Caco-2 (cell line): ENCODE measurements at regions of chr15 and their contacts with region 1.

Region 1: GRCh38 chr15:34342737-34343575 is at the starts of genes NOP10 and NUTM1:
- DNase-seq: peak; percentile 90 to 93
- H3K4me3 ChIP-seq: peak within 1 kb of the TSS; percentile 80
- H3K4me3 Mint-ChIP-seq: no peak within 1 kb of the TSS
- H3K27ac Mint-ChIP-seq: no peak within 1 kb of the TSS
- H3K4me1 ChIP-seq: no peaks in the 10 kb centered on the region
- H3K4me1 Mint-ChIP-seq: no peaks in the 10 kb centered on the region
- H3K27me3 ChIP-seq: no peaks in the 10 kb centered on the region
- H3K27me3 Mint-ChIP-seq: no peaks in the 10 kb centered on the region
- CTCF ChIP-seq: peak; percentile 85 to 93
- total RNA-seq, gene NOP10: 171 and 175 TPM in 2 replicates
- total RNA-seq, gene NUTM1: not detected in 2 replicates

Region 2: DNA sequence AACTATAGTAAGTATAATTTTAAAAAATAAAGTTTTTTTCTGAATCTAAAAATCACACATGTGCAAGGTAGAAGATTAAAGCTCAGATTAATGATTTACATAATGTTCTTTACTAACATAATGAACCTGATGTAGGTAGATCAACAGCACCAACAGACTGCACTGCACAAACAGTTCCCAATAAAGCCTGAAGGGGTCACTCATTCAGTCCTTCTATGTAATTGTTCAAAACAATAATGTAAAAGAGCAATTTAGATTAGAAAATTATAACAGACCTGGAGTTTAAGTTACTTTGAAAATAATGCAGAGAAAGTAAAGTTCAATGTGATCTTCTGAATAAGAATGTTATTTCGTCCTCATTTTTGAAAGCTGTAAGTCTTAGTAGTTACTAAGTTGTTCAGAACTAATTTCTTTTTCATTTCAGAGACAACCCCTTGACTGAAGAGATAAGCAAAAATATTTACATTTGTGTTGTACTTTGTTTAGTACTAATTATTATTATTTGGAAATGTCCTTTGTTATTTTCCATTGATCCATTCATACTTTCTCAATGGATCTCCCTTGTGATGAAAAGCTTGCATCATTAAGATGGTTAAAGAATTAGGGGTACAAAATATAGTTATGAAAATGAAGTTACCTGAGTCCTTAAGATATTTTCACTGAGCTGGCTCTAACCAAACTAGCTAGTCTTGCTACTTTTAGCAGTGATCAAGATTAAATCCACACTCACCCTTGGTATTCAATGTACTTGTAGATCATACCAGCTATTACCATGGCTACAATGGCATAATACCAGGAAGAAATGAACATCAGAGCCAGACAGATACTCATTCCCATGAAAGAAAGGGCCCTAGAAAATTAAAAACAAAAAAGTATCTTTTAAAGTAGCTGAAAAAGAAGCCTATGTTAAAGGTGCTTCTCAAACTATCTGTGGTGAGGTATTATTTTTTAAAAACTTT is 101.3 kb before region 1 on chr15:
- CTCF ChIA-PET with region 1: no interaction called
- POLR2A ChIA-PET with region 1: no interaction called
- intact Hi-C with region 1: loop called (anchors 1 kb)
- DNase-seq: peak in 1 of 2 experiments; percentile 16
- H3K4me3 ChIP-seq: no peak overlapping the region
- H3K4me3 Mint-ChIP-seq: no peak overlapping the region
- H3K27ac Mint-ChIP-seq: no peak overlapping the region
- H3K4me1 ChIP-seq: 0 out of 2 replicates have a peak, but pooled peaks cover 5% of the 10 kb centered on the region
- H3K4me1 Mint-ChIP-seq: no peaks in the 10 kb centered on the region
- H3K27me3 ChIP-seq: no peaks in the 10 kb centered on the region
- H3K27me3 Mint-ChIP-seq: no peaks in the 10 kb centered on the region
- CTCF ChIP-seq: peak; percentile 58 to 62

Region 3: DNA sequence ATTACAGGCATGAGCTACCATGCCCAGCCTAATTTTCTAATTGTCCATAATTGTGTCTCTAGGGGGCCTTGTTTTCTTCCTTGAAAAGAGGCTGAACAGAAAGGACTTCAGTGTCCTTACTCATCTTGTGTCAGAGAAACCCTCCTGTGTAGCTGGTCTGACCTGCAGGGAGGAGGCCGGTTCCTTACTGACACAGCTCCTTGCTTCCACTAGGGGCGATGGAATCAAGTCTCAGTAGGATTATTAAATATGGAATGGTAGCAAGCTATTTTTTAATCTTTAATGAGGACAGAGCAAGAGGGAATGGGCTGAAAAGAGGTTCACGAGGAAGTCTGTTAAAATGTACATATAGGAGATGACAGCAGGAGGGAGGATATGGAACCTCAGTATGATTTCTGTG is 15.4 kb after region 1 on chr15:
- CTCF ChIA-PET with region 1: interaction called, 4 read pairs
- POLR2A ChIA-PET with region 1: interaction called, 3 read pairs
- intact Hi-C with region 1: loop called (anchors 1 kb)
- DNase-seq: no peak
- H3K4me3 ChIP-seq: no peak overlapping the region
- H3K4me3 Mint-ChIP-seq: no peak overlapping the region
- H3K27ac Mint-ChIP-seq: peak overlapping the region; percentile 71
- H3K4me1 ChIP-seq: peaks cover 14% of the 10 kb centered on the region
- H3K4me1 Mint-ChIP-seq: peaks cover 22% of the 10 kb centered on the region
- H3K27me3 ChIP-seq: no peaks in the 10 kb centered on the region
- H3K27me3 Mint-ChIP-seq: no peaks in the 10 kb centered on the region
- CTCF ChIP-seq: peak in 1 of 2 experiments; percentile 37

Region 4: DNA sequence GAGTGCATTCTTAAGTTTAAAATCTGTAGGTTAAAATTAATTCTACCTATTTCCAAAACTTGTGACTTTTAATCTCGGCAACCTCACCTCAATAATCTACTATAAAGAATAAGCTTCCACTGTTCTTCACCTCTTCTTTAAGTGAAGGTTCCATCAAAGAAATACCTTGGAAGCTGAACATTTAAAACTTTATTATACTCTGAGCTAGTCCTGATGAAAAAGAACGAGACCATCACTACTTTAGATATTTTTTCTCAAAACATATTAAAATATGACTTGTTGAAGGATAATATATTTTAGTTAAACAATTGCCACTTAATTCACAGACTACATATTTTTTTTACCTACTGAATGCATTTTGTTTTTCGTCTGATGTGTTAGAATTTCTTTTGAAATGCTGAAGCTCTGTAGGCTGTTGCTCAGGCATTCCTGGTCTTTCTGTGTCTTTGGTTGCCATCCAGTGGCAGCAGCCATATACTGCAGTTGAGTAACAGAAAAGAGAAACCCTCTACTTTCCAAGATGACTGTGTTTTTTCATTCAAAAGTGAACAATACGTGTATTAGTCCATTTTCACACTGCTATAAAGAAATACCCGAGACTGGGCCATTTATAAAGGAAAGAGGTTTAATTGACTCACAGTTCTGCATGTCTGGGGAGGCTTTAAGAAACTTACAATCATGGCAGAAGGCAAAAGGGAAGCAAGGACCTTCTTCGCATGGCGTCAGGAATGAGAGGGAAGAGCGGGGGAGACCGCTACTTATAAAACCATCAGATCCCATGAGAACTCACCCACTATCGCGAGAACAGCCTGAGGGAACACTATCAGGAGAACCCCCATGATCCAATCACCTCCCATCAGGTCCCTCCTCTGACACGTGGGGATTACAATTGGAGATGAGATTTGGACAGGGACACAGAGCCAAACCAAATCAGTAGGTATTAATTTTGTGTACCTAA is 245.0 kb after region 1 on chr15:
- CTCF ChIA-PET with region 1: no interaction called
- POLR2A ChIA-PET with region 1: no interaction called
- intact Hi-C with region 1: loop called (anchors 1 kb)
- DNase-seq: peak; percentile 52 to 71
- H3K4me3 ChIP-seq: no peak overlapping the region
- H3K4me3 Mint-ChIP-seq: peak overlapping the region; percentile 65
- H3K27ac Mint-ChIP-seq: no peak overlapping the region
- H3K4me1 ChIP-seq: peaks cover 4% of the 10 kb centered on the region; the same call in 1 of the 2 replicates
- H3K4me1 Mint-ChIP-seq: no peaks in the 10 kb centered on the region
- H3K27me3 ChIP-seq: no peaks in the 10 kb centered on the region; the same call in 1 of the 2 replicates
- H3K27me3 Mint-ChIP-seq: peaks cover 19% of the 10 kb centered on the region
- CTCF ChIP-seq: peak; percentile 71 to 74